ENCODE measurements at regions of chr6 and their contacts with region 1.

Region 1: GRCh38 chr6:39377539-39377950 is 55.0 kb upstream of the KCNK16 start:
- DNase-seq: peak; percentile 61 to 63
- H3K4me3 ChIP-seq: no peak overlapping the region
- H3K27ac ChIP-seq: no peak overlapping the region
- H3K4me1 ChIP-seq: peaks cover 0 to 3% of the 10 kb centered on the region in 2 donors
- H3K27me3 ChIP-seq: no peaks in the 10 kb centered on the region
- CTCF ChIP-seq: peak in 5 of 6 experiments; percentile 19 to 76 (median 65)
- POLR2A ChIP-seq: no peak

Region 2: DNA sequence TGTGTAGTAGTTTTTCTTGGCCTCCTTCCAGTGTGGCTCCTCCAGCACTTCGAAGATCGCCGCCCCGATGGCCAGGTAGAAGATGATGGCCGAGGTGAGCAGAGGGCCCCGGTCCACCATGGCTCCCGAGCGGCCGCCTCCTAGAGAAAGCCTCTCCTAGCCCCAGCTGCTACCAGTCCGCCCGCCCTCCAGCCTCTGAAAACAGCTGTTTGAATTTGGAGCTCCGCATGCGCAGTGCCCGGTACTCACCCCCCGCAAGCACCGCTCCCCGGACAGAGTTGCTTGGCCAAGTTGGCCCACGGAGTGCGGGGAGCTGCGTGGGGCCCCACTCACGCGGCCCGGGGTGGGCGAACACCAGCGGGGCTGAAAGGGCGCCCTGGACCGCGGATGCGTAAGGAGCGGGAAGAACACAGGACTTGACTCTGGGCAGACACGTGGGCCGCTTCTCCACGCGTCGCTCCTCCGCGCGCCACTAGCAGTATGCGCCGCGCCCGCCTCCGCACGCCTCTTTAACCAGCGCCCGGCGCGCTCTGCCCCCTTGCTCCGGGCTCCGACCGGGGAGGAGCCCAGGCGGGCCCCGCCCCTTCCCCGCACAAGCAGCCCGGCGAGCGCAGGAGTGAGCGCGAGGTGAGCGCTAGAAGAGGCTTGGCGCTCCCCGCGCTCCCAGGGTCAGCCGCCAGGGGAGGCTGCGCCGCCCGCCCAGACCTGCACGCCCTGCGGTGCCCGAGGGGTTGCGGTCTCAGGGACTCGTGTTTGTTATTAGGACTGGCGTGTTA is 148.4 kb before region 1 on chr6 and contains the start of gene KCNK5:
- intact Hi-C with region 1: no loop called
- DNase-seq: peak; percentile 91 to 92
- H3K4me3 ChIP-seq: peak within 1 kb of the TSS; percentile 40 to 48 (median 46)
- H3K27ac ChIP-seq: peak within 1 kb of the TSS; percentile 27 to 91 (median 50)
- H3K4me1 ChIP-seq: peaks cover 34 to 40% of the 10 kb centered on the region in 2 donors
- H3K27me3 ChIP-seq: no peaks in the 10 kb centered on the region
- CTCF ChIP-seq: peak; percentile 49 to 89 (median 76)
- POLR2A ChIP-seq: peak; percentile 27 to 92
- total RNA-seq, gene KCNK5: 9.2 to 14.3 (median 13.0) TPM

Region 3: GRCh38 chr6:39892490-39893129 is 515.1 kb after region 1 on chr6:
- intact Hi-C with region 1: loop called (anchors 10 kb)
- DNase-seq: peak; percentile 69 to 72
- H3K4me3 ChIP-seq: no peak overlapping the region
- H3K27ac ChIP-seq: no peak overlapping the region
- H3K4me1 ChIP-seq: peaks cover 0 to 5% of the 10 kb centered on the region in 2 donors
- H3K27me3 ChIP-seq: no peaks in the 10 kb centered on the region
- CTCF ChIP-seq: peak; percentile 21 to 70 (median 62)
- POLR2A ChIP-seq: no peak